Panc1 (cell line): ENCODE measurements at regions of chr1 and their contacts with region 1.

Region 1: GRCh38 chr1:235549351-235550139 is 45.3 kb upstream of the B3GALNT2 start:
- DNase-seq: no peak
- ATAC-seq: no peak
- H3K4me3 ChIP-seq: no peak overlapping the region
- H3K27ac ChIP-seq: no peak overlapping the region
- H3K4me1 ChIP-seq: no peaks in the 10 kb centered on the region
- H3K27me3 ChIP-seq: no peaks in the 10 kb centered on the region
- CTCF ChIP-seq: no peak

Region 2: GRCh38 chr1:235450886-235451483 is 98.6 kb before region 1 on chr1:
- CTCF ChIA-PET with region 1: no interaction called
- POLR2A ChIA-PET with region 1: no interaction called
- in situ Hi-C with region 1: no loop called
- intact Hi-C with region 1: no loop called
- DNase-seq: no peak
- ATAC-seq: no peak
- H3K4me3 ChIP-seq: no peak overlapping the region
- H3K27ac ChIP-seq: no peak overlapping the region
- H3K4me1 ChIP-seq: no peaks in the 10 kb centered on the region
- H3K27me3 ChIP-seq: no peaks in the 10 kb centered on the region
- CTCF ChIP-seq: no peak

Region 3: DNA sequence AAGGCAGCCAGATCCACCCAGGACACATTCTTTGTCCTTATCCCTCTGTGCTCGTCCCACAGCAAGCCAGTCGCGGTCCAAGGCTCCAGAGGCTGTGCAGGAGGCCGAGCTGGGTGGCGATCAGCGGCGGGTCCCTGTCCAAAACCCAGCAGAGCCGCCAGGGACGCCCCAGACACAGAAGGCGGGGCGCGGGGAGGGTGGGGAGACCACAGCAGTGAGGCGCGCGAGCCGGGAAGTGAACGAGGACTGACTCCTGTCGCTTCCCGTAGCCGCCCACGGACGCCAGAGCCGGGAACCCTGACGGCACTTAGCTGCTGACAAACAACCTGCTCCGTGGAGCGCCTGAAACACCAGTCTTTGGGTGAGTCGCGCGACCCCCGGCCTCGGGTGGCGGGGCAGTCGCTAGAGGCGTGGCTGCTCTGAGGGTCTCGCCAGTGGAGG is 974.2 kb after region 1 on chr1 and contains the start of gene LGALS8:
- CTCF ChIA-PET with region 1: interaction called, 10 read pairs
- POLR2A ChIA-PET with region 1: no interaction called
- in situ Hi-C with region 1: no loop called
- intact Hi-C with region 1: no loop called
- DNase-seq: no peak
- ATAC-seq: peak; percentile 89
- H3K4me3 ChIP-seq: peak within 1 kb of the TSS; percentile 80 to 96
- H3K27ac ChIP-seq: peak within 1 kb of the TSS; percentile 100
- H3K4me1 ChIP-seq: peaks cover 41% of the 10 kb centered on the region
- H3K27me3 ChIP-seq: no peaks in the 10 kb centered on the region
- CTCF ChIP-seq: no peak
- total RNA-seq, gene LGALS8: 221 TPM